Activated T-helper 2 cell treated with anti-CD3 and anti-CD28 coated beads, Interferon-gamma antibody, Interleukin-2, Interleukin-4, amounts not matched to agents 10 μg/mL and 5 μg/mL and 100 μg/mL, durations not matched to agents 14 hours and 24 hours and 36 hours (primary cell): ENCODE measurements at regions of chr6 and their contacts with region 1.

Region 1: DNA sequence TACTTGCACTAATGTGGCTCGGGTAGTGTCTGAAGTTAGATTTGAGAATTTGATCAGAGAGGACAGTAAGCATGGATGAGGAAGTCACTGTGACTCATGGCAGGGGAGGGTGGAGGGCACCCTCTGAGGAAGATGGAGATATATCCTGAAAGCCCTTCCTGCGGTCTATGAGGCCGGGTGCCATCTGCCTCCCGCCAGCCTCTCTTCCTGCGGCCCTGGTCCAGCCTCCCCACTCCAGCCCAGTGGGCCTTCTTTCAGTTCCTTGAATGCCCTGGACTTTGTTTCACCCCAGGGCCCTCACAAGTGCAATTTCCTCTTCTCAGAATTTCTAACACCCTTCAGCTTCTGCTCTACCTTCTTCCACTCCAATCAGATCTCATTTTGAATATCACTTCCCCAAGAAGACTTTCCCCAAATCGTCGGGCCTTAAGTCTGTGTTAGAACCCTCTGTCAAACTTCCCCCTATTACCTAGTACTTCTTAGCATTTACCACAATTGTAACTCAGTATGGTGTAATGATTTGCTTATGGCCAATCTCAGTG is 20.2 kb upstream of the TNFAIP3 start:
- DNase-seq: no peak
- H3K4me3 Mint-ChIP-seq: no peak overlapping the region
- H3K27ac Mint-ChIP-seq: no peak overlapping the region
- H3K4me1 Mint-ChIP-seq: peaks cover 19% of the 10 kb centered on the region
- H3K27me3 Mint-ChIP-seq: no peaks in the 10 kb centered on the region

Region 2: GRCh38 chr6:136640134-136640915 is 1206.5 kb before region 1 on chr6:
- intact Hi-C with region 1: no loop called
- DNase-seq: no peak
- H3K4me3 Mint-ChIP-seq: no peak overlapping the region
- H3K27ac Mint-ChIP-seq: no peak overlapping the region
- H3K4me1 Mint-ChIP-seq: no peaks in the 10 kb centered on the region
- H3K27me3 Mint-ChIP-seq: no peaks in the 10 kb centered on the region

Region 3: GRCh38 chr6:137811121-137811915 is 35.5 kb before region 1 on chr6:
- intact Hi-C with region 1: loop called (anchors 5 kb)
- DNase-seq: peak; percentile 69
- H3K4me3 Mint-ChIP-seq: peak overlapping the region; percentile 7
- H3K27ac Mint-ChIP-seq: peak overlapping the region; percentile 90
- H3K4me1 Mint-ChIP-seq: peaks cover 59% of the 10 kb centered on the region
- H3K27me3 Mint-ChIP-seq: no peaks in the 10 kb centered on the region

Region 4: DNA sequence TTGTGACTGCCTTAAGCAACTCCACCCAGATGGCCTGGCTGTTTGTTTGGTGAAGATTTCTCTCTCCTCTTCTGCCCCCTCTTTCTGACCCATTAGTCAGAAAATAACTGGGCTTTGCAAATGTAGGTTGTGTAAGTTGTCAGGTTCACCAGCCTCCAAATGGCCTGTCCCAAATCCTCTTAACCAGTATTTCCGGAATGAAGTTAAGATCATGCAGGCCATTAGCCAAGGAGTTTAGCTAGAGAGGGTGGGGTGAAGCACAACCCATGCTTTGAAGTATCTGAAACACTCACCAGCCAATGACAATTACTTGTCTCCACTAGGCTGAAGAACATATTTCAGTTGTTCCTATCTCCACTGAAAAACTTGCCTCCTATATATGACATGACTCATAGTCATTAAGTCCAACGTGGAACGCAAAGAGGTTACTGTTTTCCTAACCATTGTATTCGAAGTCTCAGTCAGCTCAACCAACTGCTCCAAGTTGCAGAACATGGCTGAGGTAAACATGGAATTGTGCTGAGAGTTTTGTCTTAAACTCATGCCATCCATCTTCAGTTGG is 17.2 kb before region 1 on chr6:
- intact Hi-C with region 1: loop called (anchors 1 kb)
- DNase-seq: no peak
- H3K4me3 Mint-ChIP-seq: no peak overlapping the region
- H3K27ac Mint-ChIP-seq: peak overlapping the region; percentile 98
- H3K4me1 Mint-ChIP-seq: peaks cover 66% of the 10 kb centered on the region
- H3K27me3 Mint-ChIP-seq: no peaks in the 10 kb centered on the region

Region 5: GRCh38 chr6:138346302-138347195 is 499.7 kb after region 1 on chr6:
- intact Hi-C with region 1: no loop called
- DNase-seq: no peak
- H3K4me3 Mint-ChIP-seq: no peak overlapping the region
- H3K27ac Mint-ChIP-seq: no peak overlapping the region
- H3K4me1 Mint-ChIP-seq: no peaks in the 10 kb centered on the region
- H3K27me3 Mint-ChIP-seq: peaks cover 28% of the 10 kb centered on the region

Region 6: DNA sequence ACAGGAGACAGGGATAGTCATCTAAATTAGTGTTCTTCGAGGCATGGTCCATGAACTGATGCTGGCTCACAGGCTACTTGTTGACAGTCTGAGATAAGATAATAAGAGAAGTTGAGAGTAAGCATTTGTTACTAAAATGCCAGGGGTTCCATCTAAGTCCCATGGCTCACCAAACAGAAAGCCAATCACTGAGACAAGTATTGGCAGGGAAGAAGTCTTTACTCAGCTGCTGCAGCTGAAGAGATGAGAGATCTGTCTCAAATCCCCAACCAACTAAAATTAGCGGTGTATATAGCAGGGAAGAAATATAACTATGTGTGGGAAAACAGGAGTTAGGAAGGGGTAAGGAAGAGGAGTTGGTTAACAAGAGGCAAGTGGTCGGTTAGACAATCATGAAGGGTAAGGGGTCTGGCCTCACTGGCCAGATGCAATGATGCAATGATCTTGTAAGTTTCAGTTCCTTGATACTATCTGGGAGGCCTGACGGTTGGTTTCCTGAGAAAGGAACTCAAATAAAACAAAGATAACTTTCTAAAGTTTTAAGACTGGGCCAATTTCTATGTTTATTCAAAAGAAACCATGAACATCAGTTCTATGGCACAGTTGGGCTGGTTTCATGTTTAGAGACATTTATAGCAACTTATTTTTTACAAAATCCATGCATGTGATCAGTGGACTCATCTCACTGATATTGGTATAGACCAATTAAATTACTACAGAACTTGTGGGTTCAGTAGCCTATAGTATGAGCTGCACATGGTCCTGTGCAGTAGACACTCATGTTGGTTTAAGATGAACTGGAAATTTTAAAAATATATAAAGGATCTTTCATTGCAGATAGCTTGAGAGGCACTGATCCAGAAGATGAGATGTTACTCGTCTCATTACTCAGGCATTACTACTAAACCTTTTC is 547.3 kb after region 1 on chr6:
- intact Hi-C with region 1: no loop called
- DNase-seq: no peak
- H3K4me3 Mint-ChIP-seq: no peak overlapping the region
- H3K27ac Mint-ChIP-seq: no peak overlapping the region
- H3K4me1 Mint-ChIP-seq: peaks cover 7% of the 10 kb centered on the region
- H3K27me3 Mint-ChIP-seq: peaks cover 3% of the 10 kb centered on the region

Region 7: DNA sequence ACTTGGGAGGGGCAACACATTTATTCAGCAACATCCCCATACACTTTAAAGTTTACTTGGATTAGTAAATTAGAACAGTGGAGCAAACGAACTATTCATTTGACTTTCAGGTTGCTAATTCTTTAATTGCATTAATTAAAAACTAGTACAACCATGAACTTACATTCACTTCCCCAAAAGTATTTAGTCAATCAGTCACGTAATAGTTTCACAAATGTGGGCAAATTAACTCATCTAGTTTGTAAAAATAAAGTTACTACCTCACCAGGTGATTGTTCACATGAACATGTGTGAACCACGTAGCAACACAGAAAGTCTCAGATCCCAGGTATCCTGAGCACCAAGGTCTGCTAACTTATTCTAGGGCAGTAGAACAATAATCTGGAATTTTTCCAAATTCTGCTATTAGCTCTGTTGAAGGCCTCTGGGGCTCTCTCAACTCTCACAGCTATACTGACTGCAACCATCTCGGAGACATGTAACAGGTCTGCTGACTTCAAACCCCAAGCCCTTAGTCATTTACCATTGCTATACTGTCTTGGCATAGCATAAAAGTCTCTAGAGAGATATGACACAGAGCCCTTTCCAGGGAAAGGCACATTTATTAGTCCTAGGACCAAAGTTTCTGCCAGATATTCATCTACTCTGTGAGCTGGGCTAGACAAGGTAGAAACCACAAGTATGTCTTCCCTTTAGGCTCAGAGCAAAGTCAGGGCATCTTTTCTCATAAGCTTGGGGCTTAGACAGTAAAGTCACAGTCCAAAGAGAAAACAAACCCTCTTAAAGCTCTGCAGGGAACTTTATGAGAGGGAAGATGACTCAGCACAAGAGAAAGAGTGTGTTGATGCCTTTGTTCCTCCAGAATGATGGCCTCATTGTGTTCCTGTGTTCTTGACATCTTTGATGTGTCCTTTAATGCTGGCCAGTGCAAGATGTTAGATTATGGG is 875.9 kb after region 1 on chr6:
- intact Hi-C with region 1: no loop called
- DNase-seq: no peak
- H3K4me3 Mint-ChIP-seq: no peak overlapping the region
- H3K27ac Mint-ChIP-seq: no peak overlapping the region
- H3K4me1 Mint-ChIP-seq: no peaks in the 10 kb centered on the region
- H3K27me3 Mint-ChIP-seq: peaks cover 5% of the 10 kb centered on the region